ENCODE measurements at regions of chr2 and their contacts with region 1.

Region 1: GRCh38 chr2:101205521-101205998 is 47.1 kb upstream of the CNOT11 start:
- DNase-seq: peak; percentile 80
- H3K4me3 ChIP-seq: peak overlapping the region; percentile 26
- H3K27ac ChIP-seq: no peak overlapping the region
- H3K27me3 ChIP-seq: no peaks in the 10 kb centered on the region
- CTCF ChIP-seq: peak; percentile 77

Region 2: GRCh38 chr2:100571670-100572069 is 633.9 kb before region 1 on chr2:
- in situ Hi-C with region 1: no loop called
- DNase-seq: no peak
- H3K4me3 ChIP-seq: no peak overlapping the region
- H3K27ac ChIP-seq: no peak overlapping the region
- H3K27me3 ChIP-seq: no peaks in the 10 kb centered on the region
- CTCF ChIP-seq: no peak

Region 3: GRCh38 chr2:101036562-101037457 is 168.8 kb before region 1 on chr2:
- in situ Hi-C with region 1: loop called (anchors 25 kb)
- DNase-seq: no peak
- H3K4me3 ChIP-seq: no peak overlapping the region
- H3K27ac ChIP-seq: no peak overlapping the region
- H3K27me3 ChIP-seq: no peaks in the 10 kb centered on the region
- CTCF ChIP-seq: peak; percentile 51